Activated CD8-positive, alpha-beta T cell treated with anti-CD3 and anti-CD28 coated beads, Interleukin-2, amount 10 ng/mL, durations not matched to agents 7 days and 5 days (primary cell): ENCODE measurements at regions of chr11 and their contacts with region 1.

Region 1: DNA sequence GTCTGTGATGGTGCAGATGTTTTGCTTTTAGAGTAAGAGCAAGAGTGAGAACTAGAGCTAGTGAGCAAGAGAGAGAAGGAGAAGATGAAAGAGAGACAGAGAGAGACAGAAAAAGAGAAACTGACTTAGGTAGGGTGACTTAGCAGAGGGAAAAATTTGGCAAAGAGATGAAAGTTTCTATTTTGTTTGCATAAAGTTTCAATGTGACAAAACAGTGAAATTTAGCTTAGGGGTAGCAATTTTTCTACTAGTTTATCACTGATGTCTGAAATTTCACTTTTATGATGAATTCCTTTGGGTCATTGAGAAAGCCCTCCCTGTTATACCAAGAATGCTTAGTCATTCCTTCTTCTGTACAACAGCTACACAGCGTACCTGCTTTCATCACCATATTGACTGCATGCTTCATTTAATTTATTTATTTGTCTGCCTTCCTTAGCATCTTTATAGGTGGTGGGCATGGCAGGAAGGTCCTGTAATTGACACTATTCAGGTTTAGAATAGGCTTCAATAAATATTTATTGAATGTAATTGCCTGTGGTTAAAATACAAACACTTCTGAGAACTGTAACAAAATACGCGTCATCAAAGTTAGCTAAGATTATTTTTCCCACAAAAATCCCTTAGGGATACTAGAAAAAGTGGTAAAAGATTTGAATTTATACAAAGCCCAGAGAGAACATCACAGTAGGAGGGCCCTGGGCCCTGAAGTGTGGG is 19.9 kb upstream of the CTSC start:
- DNase-seq: no peak
- ATAC-seq: peak; percentile 42
- H3K4me3 Mint-ChIP-seq: peak overlapping the region; percentile 29
- H3K27ac Mint-ChIP-seq: peak overlapping the region; percentile 81
- H3K4me1 Mint-ChIP-seq: peaks cover 53% of the 10 kb centered on the region
- H3K27me3 Mint-ChIP-seq: no peaks in the 10 kb centered on the region

Region 2: GRCh38 chr11:87917111-87917510 is 440.4 kb before region 1 on chr11:
- CTCF ChIA-PET with region 1: no interaction called
- POLR2A ChIA-PET with region 1: no interaction called
- DNase-seq: no peak
- ATAC-seq: no peak
- H3K4me3 Mint-ChIP-seq: no peak overlapping the region
- H3K27ac Mint-ChIP-seq: no peak overlapping the region
- H3K4me1 Mint-ChIP-seq: no peaks in the 10 kb centered on the region
- H3K27me3 Mint-ChIP-seq: no peaks in the 10 kb centered on the region

Region 3: GRCh38 chr11:88345408-88345807 is 12.1 kb before region 1 on chr11:
- CTCF ChIA-PET with region 1: interaction called, 14 read pairs
- POLR2A ChIA-PET with region 1: no interaction called
- DNase-seq: peak; percentile 43
- ATAC-seq: peak; percentile 74
- H3K4me3 Mint-ChIP-seq: no peak overlapping the region
- H3K27ac Mint-ChIP-seq: peak overlapping the region; percentile 53
- H3K4me1 Mint-ChIP-seq: peaks cover 45% of the 10 kb centered on the region
- H3K27me3 Mint-ChIP-seq: no peaks in the 10 kb centered on the region

Region 4: GRCh38 chr11:88475991-88476418 is 118.5 kb after region 1 on chr11:
- CTCF ChIA-PET with region 1: no interaction called
- POLR2A ChIA-PET with region 1: no interaction called
- DNase-seq: no peak
- ATAC-seq: no peak
- H3K4me3 Mint-ChIP-seq: no peak overlapping the region
- H3K27ac Mint-ChIP-seq: no peak overlapping the region
- H3K4me1 Mint-ChIP-seq: no peaks in the 10 kb centered on the region
- H3K27me3 Mint-ChIP-seq: peaks cover 9% of the 10 kb centered on the region